Calu3 (cell line): ENCODE measurements at regions of chr10 and their contacts with region 1.

Region 1: GRCh38 chr10:69684020-69684980 is 54.3 kb downstream of the FAM241B start:
- DNase-seq: peak; percentile 83
- H3K4me3 Mint-ChIP-seq: peak overlapping the region; percentile 49
- H3K27ac Mint-ChIP-seq: peak overlapping the region; percentile 95
- H3K4me1 Mint-ChIP-seq: peaks cover 51% of the 10 kb centered on the region
- H3K27me3 Mint-ChIP-seq: peaks cover 15% of the 10 kb centered on the region
- CTCF ChIP-seq: no peak

Region 2: GRCh38 chr10:69665474-69666320 is 18.6 kb before region 1 on chr10:
- CTCF ChIA-PET with region 1: no interaction called
- intact Hi-C with region 1: loop called (anchors 2 kb)
- DNase-seq: no peak
- H3K4me3 Mint-ChIP-seq: no peak overlapping the region
- H3K27ac Mint-ChIP-seq: no peak overlapping the region
- H3K4me1 Mint-ChIP-seq: peaks cover 12% of the 10 kb centered on the region
- H3K27me3 Mint-ChIP-seq: peaks cover 63% of the 10 kb centered on the region
- CTCF ChIP-seq: no peak

Region 3: DNA sequence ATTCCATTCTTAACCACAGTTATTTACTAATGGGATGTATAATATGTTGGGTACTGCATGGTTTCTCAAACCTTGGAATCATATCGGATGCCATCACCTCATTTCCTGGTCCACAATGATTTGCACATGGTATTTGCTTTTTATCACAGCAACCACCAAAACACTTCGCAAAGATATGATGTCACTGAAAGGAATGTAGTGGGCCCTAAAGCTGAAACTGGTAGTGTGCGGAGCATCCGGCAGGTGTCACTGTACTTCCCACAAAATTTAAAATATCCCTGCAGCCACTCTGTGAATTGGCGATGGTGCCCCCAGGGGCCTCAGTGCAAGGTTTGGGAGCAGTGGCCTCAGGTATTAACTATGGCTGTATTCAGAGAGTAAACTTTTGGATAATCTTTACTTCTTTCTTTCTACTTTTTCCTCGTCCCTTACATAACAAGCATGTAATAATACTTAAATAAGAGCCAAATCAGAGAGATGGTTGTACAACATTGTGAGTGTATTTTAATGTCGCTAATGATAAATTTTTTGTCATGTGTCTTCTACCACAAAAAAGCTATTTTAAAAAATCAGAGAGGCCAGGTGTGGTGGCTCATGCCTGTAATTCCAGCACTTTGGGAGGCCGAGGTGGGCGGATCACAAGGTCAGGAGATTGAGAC is 11.9 kb after region 1 on chr10:
- CTCF ChIA-PET with region 1: interaction called, 12 read pairs
- intact Hi-C with region 1: no loop called
- DNase-seq: peak; percentile 78
- H3K4me3 Mint-ChIP-seq: no peak overlapping the region
- H3K27ac Mint-ChIP-seq: peak overlapping the region; percentile 53
- H3K4me1 Mint-ChIP-seq: peaks cover 12% of the 10 kb centered on the region
- H3K27me3 Mint-ChIP-seq: peaks cover 28% of the 10 kb centered on the region
- CTCF ChIP-seq: peak; percentile 80

Region 4: DNA sequence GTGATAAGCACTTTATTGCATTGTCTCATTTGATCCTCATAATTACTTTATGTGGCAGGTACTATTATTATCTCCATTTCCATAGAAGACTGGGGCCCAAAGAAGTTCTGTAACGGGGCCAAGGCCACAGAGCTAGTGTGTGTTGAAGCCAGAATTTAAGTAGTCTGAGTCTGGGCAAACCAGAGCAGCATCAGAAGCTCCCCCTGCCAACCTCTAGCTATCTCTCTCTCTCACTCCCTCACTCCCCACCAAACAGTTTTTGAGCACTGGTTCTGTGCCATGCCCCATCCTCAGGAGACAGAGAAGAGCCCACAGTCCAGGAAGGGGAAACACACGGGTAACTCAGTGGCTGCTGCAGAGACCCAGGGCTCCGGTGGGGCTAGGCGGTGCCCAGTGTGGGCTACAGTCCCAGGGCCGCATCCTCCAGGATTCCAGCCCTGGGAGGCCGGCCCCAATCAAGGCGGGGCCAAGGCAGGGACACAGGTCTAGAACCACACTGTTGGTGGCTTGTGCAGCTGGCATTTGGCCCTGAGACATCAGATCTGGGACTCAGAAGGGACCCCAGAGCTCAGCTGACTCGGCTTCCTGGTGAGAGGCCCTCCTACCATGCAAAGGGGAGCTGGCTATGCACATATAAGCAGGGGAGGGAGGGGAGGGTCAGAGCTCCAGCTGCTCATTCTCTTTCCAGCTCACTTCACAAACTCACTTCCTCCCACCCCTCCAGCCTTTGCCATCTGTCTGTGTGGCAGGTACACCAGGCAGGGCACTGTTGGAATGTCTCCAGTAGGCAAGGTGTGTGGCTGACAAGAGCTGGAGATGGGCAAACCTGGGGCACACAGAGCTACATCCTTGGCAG is 151.8 kb after region 1 on chr10:
- CTCF ChIA-PET with region 1: no interaction called
- intact Hi-C with region 1: no loop called
- DNase-seq: no peak
- H3K4me3 Mint-ChIP-seq: no peak overlapping the region
- H3K27ac Mint-ChIP-seq: no peak overlapping the region
- H3K4me1 Mint-ChIP-seq: peaks cover 13% of the 10 kb centered on the region
- H3K27me3 Mint-ChIP-seq: peaks cover 79% of the 10 kb centered on the region
- CTCF ChIP-seq: no peak